Psoas muscle (tissue), 8 donors: ENCODE measurements at regions of chr18 and their contacts with region 1.

Region 1: GRCh38 chr18:58529714-58530354 is 99.1 kb downstream of the ALPK2 start:
- DNase-seq: peak; percentile 40 to 71
- ATAC-seq: peak; percentile 61 to 84 (median 70)
- H3K4me3 ChIP-seq: no peak overlapping the region
- H3K27ac ChIP-seq: no peak overlapping the region
- H3K4me1 ChIP-seq: peaks cover 4% of the 10 kb centered on the region
- H3K27me3 ChIP-seq: no peaks in the 10 kb centered on the region
- CTCF ChIP-seq: peak; percentile 82

Region 2: GRCh38 chr18:58590839-58591238 is 61.0 kb after region 1 on chr18:
- intact Hi-C with region 1: loop called in 1 of 2 experiments (anchors 5 kb)
- DNase-seq: no peak
- ATAC-seq: peak in 3 of 4 donors; percentile 35 to 55 (median 38)
- H3K4me3 ChIP-seq: no peak overlapping the region
- H3K27ac ChIP-seq: peak overlapping the region; percentile 78
- H3K4me1 ChIP-seq: peaks cover 36% of the 10 kb centered on the region
- H3K27me3 ChIP-seq: no peaks in the 10 kb centered on the region
- CTCF ChIP-seq: no peak

Region 3: GRCh38 chr18:58661423-58661822 is 131.6 kb after region 1 on chr18:
- intact Hi-C with region 1: loop called (anchors 5 to 10 kb)
- DNase-seq: no peak
- ATAC-seq: peak; percentile 53 to 77 (median 74)
- H3K4me3 ChIP-seq: no peak overlapping the region
- H3K27ac ChIP-seq: no peak overlapping the region
- H3K4me1 ChIP-seq: no peaks in the 10 kb centered on the region
- H3K27me3 ChIP-seq: no peaks in the 10 kb centered on the region
- CTCF ChIP-seq: peak; percentile 35

Region 4: GRCh38 chr18:58671111-58671631 is 141.3 kb after region 1 on chr18 and contains the start of gene MALT1:
- intact Hi-C with region 1: loop called (anchors 5 to 10 kb)
- DNase-seq: peak; percentile 91 to 97
- ATAC-seq: peak; percentile 96 to 98 (median 97)
- H3K4me3 ChIP-seq: peak within 1 kb of the TSS; percentile 91
- H3K27ac ChIP-seq: peak within 1 kb of the TSS; percentile 97
- H3K4me1 ChIP-seq: peaks cover 22% of the 10 kb centered on the region
- H3K27me3 ChIP-seq: no peaks in the 10 kb centered on the region
- CTCF ChIP-seq: no peak
- total RNA-seq, gene MALT1: 7.1 to 11.2 (median 9.8) TPM

Region 5: GRCh38 chr18:58761241-58761969 is 231.6 kb after region 1 on chr18:
- intact Hi-C with region 1: loop called (anchors 1 to 5 kb)
- DNase-seq: no peak
- ATAC-seq: peak; percentile 65 to 86 (median 75)
- H3K4me3 ChIP-seq: no peak overlapping the region
- H3K27ac ChIP-seq: peak overlapping the region; percentile 23
- H3K4me1 ChIP-seq: peaks cover 14% of the 10 kb centered on the region
- H3K27me3 ChIP-seq: peaks cover 0 to 4% (median 0%) of the 10 kb centered on the region in 3 donors
- CTCF ChIP-seq: no peak

Region 6: DNA sequence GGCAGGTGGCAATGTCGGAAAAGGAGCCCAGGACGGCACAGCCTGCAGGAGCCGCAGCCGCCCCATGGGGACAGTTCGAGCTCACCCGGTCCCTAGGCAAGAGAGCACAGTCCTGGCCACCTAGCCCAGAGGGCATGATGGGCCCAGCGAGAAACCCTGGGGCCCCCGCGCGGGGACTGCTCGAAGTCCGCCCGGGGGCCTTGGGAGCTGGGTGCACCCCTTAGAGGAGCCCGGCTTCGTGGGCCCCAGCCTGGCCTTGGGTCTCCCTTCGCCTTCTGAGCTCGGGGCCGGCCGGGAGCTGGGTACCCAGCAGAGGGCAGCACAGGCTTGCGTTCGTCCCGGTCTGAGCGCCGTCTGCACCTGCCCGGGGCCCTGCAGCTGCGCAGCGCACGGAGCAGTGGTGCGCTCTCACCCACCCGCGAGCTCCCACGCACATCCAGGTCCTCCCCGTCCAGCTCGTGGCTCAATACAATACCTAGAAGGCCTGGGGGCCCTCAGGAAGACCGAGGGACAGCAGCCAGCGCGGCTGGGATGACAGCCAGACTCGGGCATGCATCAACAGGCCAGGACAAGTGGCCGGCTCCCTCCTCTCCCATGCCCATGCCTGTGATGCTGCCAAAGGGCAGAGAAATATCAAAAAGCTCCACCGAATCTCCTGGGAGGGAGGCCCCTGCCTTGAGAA is 238.6 kb after region 1 on chr18:
- intact Hi-C with region 1: loop called (anchors 1 to 5 kb)
- DNase-seq: peak; percentile 74 to 89
- ATAC-seq: peak; percentile 92 to 97 (median 96)
- H3K4me3 ChIP-seq: peak overlapping the region; percentile 57
- H3K27ac ChIP-seq: peak overlapping the region; percentile 26
- H3K4me1 ChIP-seq: no peaks in the 10 kb centered on the region
- H3K27me3 ChIP-seq: peaks cover 0 to 4% (median 0%) of the 10 kb centered on the region in 3 donors
- CTCF ChIP-seq: peak; percentile 89

Region 7: DNA sequence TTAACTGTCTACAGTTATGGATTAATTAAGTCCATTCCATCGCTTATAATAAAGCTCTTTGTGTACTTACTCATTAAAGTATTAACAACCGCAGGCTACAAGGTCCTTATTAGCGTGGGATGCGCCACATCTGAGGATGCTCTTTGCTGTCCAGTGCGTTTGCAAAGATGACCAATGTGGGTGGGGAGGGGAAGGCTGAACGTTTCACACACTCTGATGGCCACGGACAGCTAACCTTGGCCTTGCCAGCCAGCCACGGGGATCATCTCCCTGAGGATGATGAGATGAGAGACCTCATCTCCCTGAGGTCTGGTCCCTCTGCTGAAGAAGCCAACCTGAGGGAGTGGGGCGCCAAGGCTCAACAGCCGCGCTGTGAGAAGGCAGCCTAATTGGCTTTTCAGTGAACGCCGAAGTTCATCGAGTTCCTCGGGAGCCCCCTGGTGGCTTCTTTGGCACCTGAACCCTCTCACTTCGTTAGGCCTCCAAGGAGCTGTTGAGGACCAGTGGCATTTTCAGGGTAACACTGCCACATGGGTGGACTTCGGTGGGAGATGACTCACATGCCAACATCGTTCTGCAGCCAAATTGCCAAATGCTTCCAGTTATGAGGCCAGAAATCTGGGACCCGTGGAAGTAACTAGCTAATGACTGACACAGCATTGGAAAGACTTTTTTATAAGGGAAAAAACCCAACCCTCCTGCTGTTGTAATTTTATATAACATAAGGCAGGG is 540.5 kb after region 1 on chr18:
- intact Hi-C with region 1: loop called (anchors 10 kb)
- DNase-seq: peak; percentile 82 to 90
- ATAC-seq: peak; percentile 86 to 94 (median 88)
- H3K4me3 ChIP-seq: no peak overlapping the region
- H3K27ac ChIP-seq: no peak overlapping the region
- H3K4me1 ChIP-seq: no peaks in the 10 kb centered on the region
- H3K27me3 ChIP-seq: no peaks in the 10 kb centered on the region
- CTCF ChIP-seq: peak; percentile 90